ENCODE measurements at regions of chr18 and their contacts with region 1.

Region 1: GRCh38 chr18:13566941-13567746 is 159.2 kb downstream of the FAM210A start:
- DNase-seq: peak; percentile 76
- H3K4me3 ChIP-seq: peak overlapping the region; percentile 47
- H3K27ac ChIP-seq: peak overlapping the region; percentile 70
- H3K4me1 ChIP-seq: peaks cover 58% of the 10 kb centered on the region
- CTCF ChIP-seq: no peak

Region 2: DNA sequence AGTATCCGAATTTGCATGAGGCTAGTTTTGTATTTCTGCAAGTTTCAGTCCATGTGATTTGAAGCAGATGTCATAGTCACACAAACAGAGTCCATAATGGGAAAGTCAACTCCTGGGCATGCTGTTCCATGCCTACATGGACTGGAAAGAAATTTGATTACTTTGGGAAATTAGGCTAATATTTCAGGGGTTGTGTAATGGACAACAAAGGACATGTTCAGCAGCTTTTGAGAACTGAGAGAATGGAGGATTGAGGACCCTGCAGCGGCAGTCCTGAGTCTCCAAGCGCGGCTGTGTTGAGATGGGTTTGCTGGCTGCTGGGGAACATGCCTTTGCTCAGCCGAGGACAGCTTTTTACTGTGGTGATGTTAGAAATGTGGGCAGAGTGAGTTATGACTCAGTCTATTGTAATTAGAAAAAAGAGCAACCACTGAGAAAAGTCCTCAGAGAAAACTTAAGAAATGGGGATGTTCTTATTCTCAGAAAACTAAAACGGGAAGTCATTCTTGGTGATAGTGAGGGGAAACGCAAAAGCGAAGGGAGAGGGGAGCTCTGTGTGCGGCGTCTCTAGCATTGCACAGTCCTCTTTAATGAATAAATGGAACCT is 10.1 kb after region 1 on chr18:
- CTCF ChIA-PET with region 1: interaction called, 3 read pairs
- POLR2A ChIA-PET with region 1: interaction called, 35 read pairs
- intact Hi-C with region 1: no loop called
- DNase-seq: no peak
- H3K4me3 ChIP-seq: peak overlapping the region; percentile 35
- H3K27ac ChIP-seq: peak overlapping the region; percentile 8
- H3K4me1 ChIP-seq: peaks cover 39% of the 10 kb centered on the region
- CTCF ChIP-seq: no peak

Region 3: DNA sequence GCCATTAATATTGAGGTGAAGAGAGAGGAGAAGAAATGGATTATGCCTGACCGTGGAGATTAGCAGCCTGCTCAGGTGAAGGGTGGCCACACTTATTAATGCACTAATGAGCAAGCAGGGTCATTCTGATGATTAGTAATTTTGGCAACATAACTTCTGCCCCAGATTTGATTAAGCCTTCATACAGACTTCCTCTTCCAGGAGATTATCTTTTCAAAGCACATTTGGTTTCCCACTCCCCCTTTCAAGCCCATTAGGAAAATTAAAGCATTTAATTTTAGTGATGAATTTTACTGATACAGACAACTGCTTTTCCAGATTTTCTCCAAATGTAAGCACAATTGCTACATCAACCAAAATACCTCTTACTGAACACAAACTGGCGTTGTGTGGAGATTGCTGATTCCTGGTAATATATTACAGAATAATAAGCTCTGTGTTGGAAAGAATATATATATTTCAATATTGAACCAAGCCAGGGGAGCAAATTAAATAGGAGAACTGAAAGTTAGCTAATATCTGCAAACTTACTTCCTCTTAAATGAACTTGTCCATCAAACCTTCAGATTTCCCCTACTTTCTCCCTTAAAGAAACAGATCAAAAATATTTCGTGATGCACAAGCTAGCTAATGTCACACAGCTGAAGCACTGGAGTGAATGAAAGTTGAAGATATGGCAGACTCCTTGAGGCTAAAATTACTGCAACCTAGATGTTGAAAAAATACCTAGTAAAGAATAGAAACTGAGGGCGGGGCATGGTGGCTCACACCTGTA is 18.4 kb after region 1 on chr18:
- CTCF ChIA-PET with region 1: no interaction called
- POLR2A ChIA-PET with region 1: interaction called, 11 read pairs
- intact Hi-C with region 1: no loop called
- DNase-seq: peak; percentile 43
- H3K4me3 ChIP-seq: peak overlapping the region; percentile 17
- H3K27ac ChIP-seq: peak overlapping the region; percentile 29
- H3K4me1 ChIP-seq: peaks cover 30% of the 10 kb centered on the region
- CTCF ChIP-seq: no peak

Region 4: DNA sequence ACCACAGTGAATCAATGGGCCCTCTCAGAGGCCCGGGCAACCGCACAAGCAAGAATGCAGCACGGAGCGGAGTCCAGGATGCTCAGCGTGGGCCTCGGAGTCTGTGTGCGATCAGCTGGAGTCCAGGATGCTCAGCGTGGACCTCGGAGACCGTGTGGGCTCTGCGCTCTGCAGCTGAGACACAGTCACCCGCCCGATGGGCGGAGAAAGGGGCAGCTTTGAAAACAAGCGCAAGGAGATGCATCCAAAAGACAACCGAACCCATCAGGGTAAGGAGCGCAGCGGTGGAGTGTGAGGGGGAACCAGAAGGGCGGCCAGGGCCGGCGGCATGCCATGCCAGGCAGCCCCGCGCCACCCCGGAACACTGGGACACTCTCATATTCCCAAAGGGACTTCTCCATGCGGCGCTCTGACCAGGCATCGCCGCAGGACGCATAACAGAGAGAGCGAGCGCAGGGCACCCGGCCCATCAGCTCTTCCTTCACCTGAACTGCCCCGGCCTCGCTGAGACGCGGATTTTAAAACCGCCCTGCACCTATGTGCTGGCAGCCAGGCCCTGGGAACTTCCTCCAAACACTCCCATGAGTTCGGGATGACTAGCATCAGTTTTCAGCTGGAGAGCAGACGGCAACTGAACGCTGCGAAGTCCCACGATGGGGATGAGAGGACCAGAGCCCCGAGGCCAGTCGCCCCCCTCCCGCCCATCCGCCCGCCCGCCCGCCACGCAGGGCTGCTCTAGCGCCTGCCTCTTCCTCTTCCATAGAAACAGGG is 301.5 kb after region 1 on chr18:
- CTCF ChIA-PET with region 1: no interaction called
- POLR2A ChIA-PET with region 1: no interaction called
- intact Hi-C with region 1: no loop called
- DNase-seq: no peak
- H3K4me3 ChIP-seq: no peak overlapping the region
- H3K27ac ChIP-seq: no peak overlapping the region
- H3K4me1 ChIP-seq: no peaks in the 10 kb centered on the region
- CTCF ChIP-seq: no peak